ENCODE measurements at regions of chr1 and their contacts with region 1.

Region 1: GRCh38 chr1:211541720-211542453 is 37.1 kb downstream of the SLC30A1 start:
- DNase-seq: no peak
- ATAC-seq: no peak
- H3K4me3 ChIP-seq: no peak overlapping the region
- H3K27ac ChIP-seq: no peak overlapping the region
- H3K4me1 ChIP-seq: no peaks in the 10 kb centered on the region
- H3K27me3 ChIP-seq: no peaks in the 10 kb centered on the region
- CTCF ChIP-seq: no peak

Region 2: DNA sequence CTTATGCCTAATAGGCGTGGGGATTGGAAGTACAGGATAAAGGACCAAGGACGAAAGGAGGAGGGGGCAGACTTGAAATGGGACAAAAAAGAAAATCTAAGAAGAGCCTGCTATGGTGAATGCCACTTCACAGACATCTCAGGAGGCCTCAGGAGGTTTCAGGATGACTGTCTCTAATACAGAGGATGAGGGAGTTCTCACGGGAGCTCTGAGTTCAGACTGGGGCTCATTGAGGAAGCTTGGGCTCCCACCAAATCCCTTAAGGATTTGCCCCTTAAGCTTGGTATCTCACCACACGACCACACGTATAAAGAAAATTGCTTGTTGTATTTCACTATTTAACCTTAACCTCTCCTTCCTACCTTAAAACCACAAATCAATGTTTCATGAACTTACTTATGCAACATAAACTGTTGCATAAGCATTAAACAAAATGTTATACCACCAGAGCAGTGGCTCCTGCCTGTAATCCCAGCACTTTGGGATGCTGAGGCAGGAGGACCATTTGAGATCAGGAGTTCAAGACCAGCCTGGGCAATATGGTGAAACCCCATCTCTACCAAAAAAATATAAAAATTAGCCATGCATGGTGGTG is 24.6 kb after region 1 on chr1:
- CTCF ChIA-PET with region 1: interaction called, 5 read pairs
- POLR2A ChIA-PET with region 1: interaction called, 19 read pairs
- in situ Hi-C with region 1: no loop called
- intact Hi-C with region 1: no loop called
- DNase-seq: no peak
- ATAC-seq: no peak
- H3K4me3 ChIP-seq: no peak overlapping the region
- H3K27ac ChIP-seq: no peak overlapping the region
- H3K4me1 ChIP-seq: no peaks in the 10 kb centered on the region
- H3K27me3 ChIP-seq: no peaks in the 10 kb centered on the region
- CTCF ChIP-seq: no peak

Region 3: GRCh38 chr1:211596418-211597181 is 54.7 kb after region 1 on chr1:
- CTCF ChIA-PET with region 1: interaction called, 10 read pairs
- POLR2A ChIA-PET with region 1: no interaction called
- in situ Hi-C with region 1: no loop called
- intact Hi-C with region 1: no loop called
- DNase-seq: no peak
- ATAC-seq: no peak
- H3K4me3 ChIP-seq: no peak overlapping the region
- H3K27ac ChIP-seq: no peak overlapping the region
- H3K4me1 ChIP-seq: 0 out of 2 replicates have a peak, but pooled peaks cover 6% of the 10 kb centered on the region
- H3K27me3 ChIP-seq: no peaks in the 10 kb centered on the region
- CTCF ChIP-seq: no peak